Aorta (tissue), 5 donors: ENCODE measurements at regions of chr13 and their contacts with region 1.

Region 1: DNA sequence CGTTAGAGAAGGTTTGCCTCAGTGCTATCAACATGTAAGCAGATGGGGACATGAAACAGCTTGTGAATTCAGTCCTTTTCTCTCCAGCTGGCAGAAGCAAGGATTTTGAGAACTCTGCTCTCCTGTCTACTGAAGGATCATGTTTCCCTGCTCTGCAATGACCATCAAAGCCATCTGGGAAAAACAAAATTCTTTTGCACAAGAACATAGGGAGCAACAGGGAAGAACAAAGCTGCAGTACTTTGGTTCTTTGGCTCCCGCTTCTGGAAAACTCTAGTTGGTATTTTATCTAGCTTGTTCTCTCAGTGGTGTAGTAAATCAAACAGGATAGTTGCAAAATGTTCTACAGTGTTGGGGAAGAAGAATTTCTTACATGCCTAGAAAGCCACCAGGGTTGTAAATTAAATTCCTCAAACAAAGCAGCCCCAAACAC is 270.4 kb downstream of the ENOX1 start:
- DNase-seq: no peak
- ATAC-seq: peak; percentile 86
- H3K4me3 ChIP-seq: no peak overlapping the region
- H3K27ac ChIP-seq: peak overlapping the region; percentile 48 to 57
- H3K4me1 ChIP-seq: peaks cover 2 to 8% of the 10 kb centered on the region in 2 donors
- H3K27me3 ChIP-seq: no peaks in the 10 kb centered on the region

Region 2: GRCh38 chr13:43303033-43303729 is 213.2 kb before region 1 on chr13:
- intact Hi-C with region 1: no loop called
- DNase-seq: peak; percentile 68 to 78
- ATAC-seq: peak; percentile 67
- H3K4me3 ChIP-seq: no peak overlapping the region
- H3K27ac ChIP-seq: no peak overlapping the region
- H3K4me1 ChIP-seq: no peaks in the 10 kb centered on the region
- H3K27me3 ChIP-seq: no peaks in the 10 kb centered on the region

Region 3: GRCh38 chr13:43368003-43368402 is 148.4 kb before region 1 on chr13:
- intact Hi-C with region 1: loop called in 1 of 2 experiments (anchors 10 kb)
- DNase-seq: no peak
- ATAC-seq: no peak
- H3K4me3 ChIP-seq: peak overlapping the region; percentile 22 to 49
- H3K27ac ChIP-seq: no peak overlapping the region
- H3K4me1 ChIP-seq: peaks cover 2 to 3% of the 10 kb centered on the region in 2 donors
- H3K27me3 ChIP-seq: no peaks in the 10 kb centered on the region